ENCODE measurements at regions of chr3 and their contacts with region 1.

Region 1: DNA sequence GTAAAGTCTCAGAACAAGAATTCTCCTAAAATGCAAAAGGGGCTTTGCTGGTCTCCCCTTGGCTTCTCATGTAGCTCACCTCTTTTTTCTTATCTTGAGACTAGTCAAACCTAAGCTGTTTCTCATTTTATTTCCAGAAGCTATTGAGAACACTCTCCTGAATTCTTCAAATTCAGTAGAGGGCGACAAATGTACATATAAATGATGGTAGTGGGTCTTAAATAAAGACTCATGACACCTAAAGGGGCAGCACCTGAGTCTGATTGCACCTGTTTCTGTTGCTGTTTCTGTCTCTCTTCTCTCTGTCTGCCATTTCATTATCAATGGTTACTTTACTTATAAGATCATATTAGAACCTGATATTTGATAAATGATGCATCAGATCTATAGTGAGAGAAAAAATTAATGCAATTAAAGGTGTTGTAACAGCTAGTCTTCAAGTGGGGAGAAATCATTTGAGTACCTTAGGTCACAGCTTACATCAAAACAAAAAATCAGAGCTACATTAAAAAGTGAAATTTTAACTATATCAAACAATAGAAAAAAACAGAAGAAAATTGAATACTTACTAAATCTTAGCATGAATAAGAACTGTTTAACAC is 7.0 kb downstream of the ADIPOQ start:
- DNase-seq: peak; percentile 25
- H3K4me3 Mint-ChIP-seq: no peak overlapping the region
- H3K27ac Mint-ChIP-seq: no peak overlapping the region
- H3K4me1 Mint-ChIP-seq: peaks cover 18% of the 10 kb centered on the region
- H3K27me3 Mint-ChIP-seq: peaks cover 4% of the 10 kb centered on the region

Region 2: DNA sequence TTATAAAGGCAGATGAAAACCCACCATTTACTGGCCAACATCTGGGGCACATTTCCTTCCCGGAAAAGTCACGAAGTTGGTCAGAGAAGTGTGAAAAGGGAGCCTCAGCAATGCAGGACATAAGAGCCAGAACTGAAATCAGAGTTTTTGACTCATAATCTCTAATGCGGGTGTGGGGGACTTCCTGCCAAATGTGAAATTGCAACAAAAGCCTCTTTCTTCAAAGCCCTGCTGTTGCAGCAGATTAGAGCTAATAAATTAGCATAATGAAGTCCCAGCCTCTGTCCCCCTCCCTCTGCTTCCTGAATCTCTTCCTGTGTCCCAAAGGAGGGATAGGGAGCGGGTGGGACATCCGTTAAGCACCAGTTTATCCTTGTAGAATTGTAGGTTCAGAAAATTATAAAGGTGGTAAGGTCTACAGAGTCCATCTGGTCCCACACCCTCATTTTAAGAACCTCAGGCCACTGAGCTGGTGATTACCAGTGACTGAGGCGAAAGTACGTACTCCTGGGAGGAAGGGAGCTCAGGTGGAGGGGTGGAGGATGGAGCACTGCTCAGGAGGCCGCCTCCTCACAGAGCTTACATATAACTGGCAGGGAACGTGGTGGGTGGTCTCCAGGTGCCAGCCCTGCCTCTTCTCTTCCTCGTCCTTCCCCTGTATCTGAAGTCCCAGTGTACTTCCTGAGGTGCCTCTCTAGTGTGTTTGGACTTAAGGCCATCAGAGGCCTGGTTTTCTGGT is 115.8 kb after region 1 on chr3:
- CTCF ChIA-PET with region 1: interaction called, 11 read pairs
- POLR2A ChIA-PET with region 1: no interaction called
- intact Hi-C with region 1: no loop called
- DNase-seq: peak; percentile 34
- H3K4me3 Mint-ChIP-seq: no peak overlapping the region
- H3K27ac Mint-ChIP-seq: peak overlapping the region; percentile 67
- H3K4me1 Mint-ChIP-seq: peaks cover 68% of the 10 kb centered on the region
- H3K27me3 Mint-ChIP-seq: no peaks in the 10 kb centered on the region

Region 3: DNA sequence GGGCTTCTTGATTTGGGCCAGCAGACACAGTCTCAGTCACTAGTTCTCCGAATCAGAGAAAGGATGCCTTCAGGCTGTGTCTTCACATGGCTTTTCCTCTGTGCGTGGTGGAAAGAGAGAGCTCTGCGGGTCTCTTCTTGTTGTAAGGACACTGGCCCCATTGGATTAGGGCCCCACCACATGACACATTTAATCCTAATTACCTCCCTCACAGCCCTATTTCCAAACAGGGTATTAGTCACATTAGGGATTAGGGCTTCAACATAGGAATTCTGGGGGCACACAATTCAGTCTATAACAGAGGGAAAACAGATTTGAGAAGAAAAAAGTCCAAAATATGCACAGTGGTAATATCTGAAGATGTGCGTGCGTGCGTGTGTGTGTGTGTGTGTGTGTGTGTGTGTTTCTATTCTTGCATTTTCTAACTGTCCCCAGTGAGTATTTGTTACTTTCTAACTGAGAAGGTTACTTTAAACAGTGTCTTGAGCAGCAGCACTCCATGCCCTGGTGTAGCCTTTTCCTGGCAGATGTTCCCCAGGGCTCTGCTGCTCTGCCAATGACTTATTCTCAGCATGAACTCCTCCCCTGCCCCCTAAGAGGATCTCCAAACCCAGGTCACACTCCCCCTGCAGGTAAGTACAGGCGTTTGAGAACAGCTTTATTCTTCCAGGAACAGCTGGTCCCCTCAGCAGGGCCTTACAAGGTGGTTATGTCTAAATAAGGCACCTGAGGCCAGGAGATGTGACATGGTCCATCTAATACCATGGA is 216.9 kb after region 1 on chr3:
- CTCF ChIA-PET with region 1: interaction called, 21 read pairs
- POLR2A ChIA-PET with region 1: no interaction called
- intact Hi-C with region 1: loop called (anchors 1 kb)
- DNase-seq: peak; percentile 61
- H3K4me3 Mint-ChIP-seq: no peak overlapping the region
- H3K27ac Mint-ChIP-seq: peak overlapping the region; percentile 66
- H3K4me1 Mint-ChIP-seq: peaks cover 60% of the 10 kb centered on the region
- H3K27me3 Mint-ChIP-seq: no peaks in the 10 kb centered on the region

Region 4: DNA sequence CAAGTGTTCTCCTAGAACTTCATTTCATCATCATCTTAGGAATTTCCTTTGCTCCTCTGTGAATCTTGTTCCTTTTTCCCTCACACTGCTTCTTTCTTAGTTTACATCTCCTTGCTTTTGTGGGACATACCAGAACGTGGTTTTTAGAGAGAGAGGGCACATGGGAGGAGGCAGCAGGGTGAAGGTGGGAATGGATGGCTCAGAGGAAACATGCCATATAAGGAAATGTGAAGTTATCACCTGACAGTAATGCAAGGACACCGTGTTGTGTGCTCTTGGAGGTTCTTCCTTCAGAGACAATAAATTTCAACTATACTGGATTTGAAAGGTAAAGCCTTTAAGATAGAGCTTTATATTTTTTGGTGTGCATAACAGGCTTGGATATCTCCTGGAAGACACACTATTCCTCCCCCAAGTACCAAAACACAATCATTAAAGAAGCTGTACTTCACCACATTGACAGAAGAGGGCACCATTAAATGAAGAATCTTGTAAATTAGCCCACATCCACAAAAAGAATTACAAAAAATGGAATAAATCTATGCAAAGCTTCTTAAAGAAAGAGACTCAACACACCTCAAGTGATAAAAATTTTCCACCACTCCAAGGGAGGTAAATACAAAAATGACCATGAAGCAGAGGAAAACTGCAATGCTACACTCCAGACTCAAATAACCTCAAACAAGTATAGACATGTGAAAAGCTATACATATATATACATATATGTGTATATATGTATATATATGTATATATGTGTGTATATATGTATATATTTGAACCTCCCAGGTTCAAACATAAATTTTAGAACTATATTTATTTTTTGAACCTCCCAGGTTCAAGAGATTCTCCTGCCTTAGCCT is 263.7 kb after region 1 on chr3:
- CTCF ChIA-PET with region 1: interaction called, 33 read pairs
- POLR2A ChIA-PET with region 1: no interaction called
- intact Hi-C with region 1: loop called (anchors 1 kb)
- DNase-seq: no peak
- H3K4me3 Mint-ChIP-seq: no peak overlapping the region
- H3K27ac Mint-ChIP-seq: peak overlapping the region; percentile 44
- H3K4me1 Mint-ChIP-seq: peaks cover 7% of the 10 kb centered on the region
- H3K27me3 Mint-ChIP-seq: no peaks in the 10 kb centered on the region

Region 5: GRCh38 chr3:187150599-187150998 is 301.1 kb after region 1 on chr3:
- CTCF ChIA-PET with region 1: interaction called, 42 read pairs
- POLR2A ChIA-PET with region 1: no interaction called
- intact Hi-C with region 1: loop called (anchors 1 kb)
- DNase-seq: peak; percentile 81
- H3K4me3 Mint-ChIP-seq: no peak overlapping the region
- H3K27ac Mint-ChIP-seq: no peak overlapping the region
- H3K4me1 Mint-ChIP-seq: no peaks in the 10 kb centered on the region
- H3K27me3 Mint-ChIP-seq: peaks cover 6% of the 10 kb centered on the region

Measured in activated CD4-positive, alpha-beta memory T cell treated with anti-CD3 and anti-CD28 coated beads for 36 hours (primary cell).